ENCODE measurements at regions of chr17 and their contacts with region 1.

Region 1: GRCh38 chr17:77061669-77062068 is 79.1 kb upstream of the SEC14L1 start:
- DNase-seq: no peak
- ATAC-seq: no peak
- H3K4me3 ChIP-seq: no peak overlapping the region
- H3K27ac ChIP-seq: no peak overlapping the region
- H3K4me1 ChIP-seq: peaks cover 9% of the 10 kb centered on the region
- H3K27me3 ChIP-seq: peaks cover 3 to 42% of the 10 kb centered on the region in 2 experiments
- CTCF ChIP-seq: no peak
- EP300 ChIP-seq: no peak
- POLR2A ChIP-seq: no peak
- RAD21 ChIP-seq: no peak

Region 2: DNA sequence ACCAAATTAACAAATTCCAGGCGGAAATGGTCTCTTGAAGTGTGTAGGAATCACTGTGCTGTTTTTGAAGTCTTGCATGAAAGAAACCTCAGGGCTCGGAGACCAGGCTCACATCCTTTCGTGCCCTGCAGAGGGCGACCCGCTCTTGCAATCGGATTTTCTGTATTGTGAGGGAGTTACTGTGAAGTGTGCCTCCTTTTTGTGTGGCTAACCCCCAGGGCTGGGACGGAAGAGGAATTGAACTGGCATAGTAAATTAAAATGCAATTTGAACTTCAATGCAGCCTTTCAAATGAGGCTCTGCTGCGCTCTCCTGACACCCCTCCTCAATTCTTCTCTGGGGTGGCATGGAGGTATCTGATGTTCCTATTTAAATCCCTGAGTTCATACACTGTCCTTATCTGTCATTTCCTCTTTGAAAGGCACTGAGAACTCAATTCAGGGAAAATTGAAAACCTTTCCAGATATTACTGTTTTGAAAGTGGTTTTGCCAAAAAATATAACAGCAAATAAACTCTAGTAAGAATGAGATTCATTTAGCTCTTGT is 245.0 kb before region 1 on chr17:
- CTCF ChIA-PET with region 1: interaction called, 6 read pairs
- POLR2A ChIA-PET with region 1: no interaction called
- in situ Hi-C with region 1: loop called (anchors 10 kb)
- intact Hi-C with region 1: loop called (anchors 1 kb)
- DNase-seq: peak; percentile 44
- ATAC-seq: peak; percentile 87
- H3K4me3 ChIP-seq: no peak overlapping the region
- H3K27ac ChIP-seq: no peak overlapping the region
- H3K4me1 ChIP-seq: no peaks in the 10 kb centered on the region
- H3K27me3 ChIP-seq: peaks cover 9 to 28% of the 10 kb centered on the region in 2 experiments; a peak in 4 of 5 replicates
- CTCF ChIP-seq: peak; percentile 78
- EP300 ChIP-seq: no peak
- POLR2A ChIP-seq: no peak
- RAD21 ChIP-seq: peak; percentile 45; the same call in 1 of the 2 replicates

Region 3: DNA sequence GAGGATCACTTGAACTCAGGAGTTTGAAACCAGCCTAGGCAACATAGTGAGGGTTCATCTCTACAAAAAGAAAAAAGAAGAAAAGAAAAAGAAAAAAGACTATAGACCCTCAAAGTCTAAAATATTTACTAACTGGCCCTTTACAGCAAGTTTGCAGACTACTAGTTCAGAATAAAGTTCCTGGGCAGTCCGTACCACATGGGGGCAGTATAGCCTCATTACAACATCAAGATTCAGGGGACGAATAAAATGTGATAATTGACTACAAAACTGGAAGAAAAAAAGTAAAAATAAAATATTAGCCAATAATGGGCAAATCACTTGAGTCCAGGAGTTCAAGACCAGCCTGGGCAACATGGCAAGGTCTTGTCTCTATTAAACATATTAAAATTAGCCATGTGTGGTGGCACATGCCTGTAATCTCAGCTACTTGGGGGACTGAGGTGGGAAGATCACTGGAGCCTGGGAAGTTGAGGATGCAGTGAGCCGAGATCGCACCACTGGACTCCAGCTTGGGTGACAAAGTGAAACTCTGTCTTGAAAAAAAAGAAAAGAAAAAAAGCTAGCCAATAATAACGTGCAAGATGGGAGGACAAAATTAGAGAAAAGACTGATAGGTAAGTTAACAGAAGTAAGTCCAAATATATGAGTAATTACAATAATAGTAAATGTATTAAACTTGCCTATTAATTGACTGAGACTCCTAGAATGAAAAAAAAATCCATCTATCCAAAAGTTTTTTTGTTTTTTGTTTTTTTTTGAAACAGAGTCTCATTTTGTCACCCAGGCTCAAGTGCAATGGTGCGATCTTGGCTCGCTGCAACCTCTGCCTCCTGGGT is 50.3 kb before region 1 on chr17:
- CTCF ChIA-PET with region 1: interaction called, 23 read pairs
- POLR2A ChIA-PET with region 1: no interaction called
- in situ Hi-C with region 1: loop called (anchors 5 kb)
- intact Hi-C with region 1: loop called (anchors 1 kb)
- DNase-seq: peak; percentile 53
- ATAC-seq: 0 out of 3 replicates have a peak, but pooled peaks have one; percentile 39
- H3K4me3 ChIP-seq: no peak overlapping the region
- H3K27ac ChIP-seq: no peak overlapping the region
- H3K4me1 ChIP-seq: no peaks in the 10 kb centered on the region
- H3K27me3 ChIP-seq: no peaks in the 10 kb centered on the region
- CTCF ChIP-seq: peak; percentile 71
- EP300 ChIP-seq: no peak
- POLR2A ChIP-seq: no peak
- RAD21 ChIP-seq: peak; percentile 62

Measured in HepG2 (cell line).